ENCODE measurements at regions of chr22 and their contacts with region 1.

Region 1: GRCh38 chr22:17501679-17502285 is 61.5 kb upstream of the SLC25A18 start:
- DNase-seq: peak; percentile 52
- H3K4me3 Mint-ChIP-seq: no peak overlapping the region
- H3K27ac Mint-ChIP-seq: no peak overlapping the region
- H3K4me1 Mint-ChIP-seq: no peaks in the 10 kb centered on the region
- H3K27me3 Mint-ChIP-seq: peaks cover 2% of the 10 kb centered on the region

Region 2: DNA sequence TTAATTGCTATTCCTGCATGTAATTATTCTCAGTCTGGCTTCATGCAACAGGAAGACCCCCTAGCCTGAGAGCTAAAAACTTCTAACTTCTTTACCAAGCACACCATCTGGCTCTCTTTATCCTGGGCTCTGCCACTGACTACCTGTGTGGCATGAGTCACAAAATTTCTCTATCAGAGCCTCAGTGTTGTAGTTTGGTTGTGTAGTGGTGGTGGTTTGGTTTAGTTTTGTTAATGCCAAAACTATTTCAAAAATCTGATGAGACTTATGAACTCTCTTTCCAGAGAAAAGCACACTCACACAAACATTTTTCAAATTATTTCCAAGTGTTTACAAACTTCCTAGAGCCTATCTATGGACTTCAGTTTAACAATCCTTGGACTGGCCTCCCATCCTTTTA is 424.5 kb before region 1 on chr22:
- CTCF ChIA-PET with region 1: interaction called, 21 read pairs
- intact Hi-C with region 1: loop called (anchors 1 kb)
- DNase-seq: no peak
- H3K4me3 Mint-ChIP-seq: no peak overlapping the region
- H3K27ac Mint-ChIP-seq: no peak overlapping the region
- H3K4me1 Mint-ChIP-seq: peaks cover 20% of the 10 kb centered on the region
- H3K27me3 Mint-ChIP-seq: no peaks in the 10 kb centered on the region

Region 3: GRCh38 chr22:17205432-17205831 is 296.4 kb before region 1 on chr22:
- CTCF ChIA-PET with region 1: interaction called, 23 read pairs
- intact Hi-C with region 1: loop called (anchors 1 kb)
- DNase-seq: peak; percentile 14
- H3K4me3 Mint-ChIP-seq: no peak overlapping the region
- H3K27ac Mint-ChIP-seq: no peak overlapping the region
- H3K4me1 Mint-ChIP-seq: peaks cover 9% of the 10 kb centered on the region
- H3K27me3 Mint-ChIP-seq: no peaks in the 10 kb centered on the region

Region 4: DNA sequence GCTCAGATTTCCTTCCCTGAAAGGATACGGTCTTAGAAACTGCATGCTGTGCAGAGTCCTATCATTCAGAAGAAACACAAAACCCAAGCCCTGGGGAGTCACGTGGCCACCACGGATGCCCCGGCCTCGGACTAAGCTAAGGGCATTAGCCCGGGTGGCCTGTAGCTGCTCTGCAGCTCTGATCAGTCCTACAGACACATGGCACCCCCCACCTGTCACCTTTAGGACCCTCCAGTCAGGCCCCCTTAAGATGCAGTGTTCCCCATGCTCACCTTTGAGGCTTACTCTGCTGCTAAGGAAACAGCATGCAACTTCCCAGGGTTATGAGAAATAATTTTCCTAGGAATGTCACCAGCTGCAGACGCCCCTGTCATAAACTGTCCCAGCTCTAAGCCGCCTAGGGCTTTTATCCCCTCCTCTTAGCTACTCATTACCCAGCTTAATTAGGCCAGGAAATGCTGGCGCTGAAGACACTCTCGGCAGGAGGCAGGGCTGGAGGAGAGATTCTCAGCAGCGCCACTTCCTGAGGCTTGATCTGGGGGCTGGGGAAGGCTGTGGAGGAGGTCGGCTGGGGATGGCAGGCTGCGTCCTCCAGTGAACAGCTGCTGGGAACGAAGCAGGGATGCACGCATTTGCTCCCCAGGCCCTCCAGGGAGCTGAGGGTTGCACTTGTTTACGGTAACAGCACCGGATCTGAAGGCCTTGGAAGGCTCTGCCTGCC is 235.4 kb before region 1 on chr22:
- CTCF ChIA-PET with region 1: interaction called, 3 read pairs
- intact Hi-C with region 1: loop called (anchors 2 kb)
- DNase-seq: peak; percentile 54
- H3K4me3 Mint-ChIP-seq: no peak overlapping the region
- H3K27ac Mint-ChIP-seq: no peak overlapping the region
- H3K4me1 Mint-ChIP-seq: peaks cover 20% of the 10 kb centered on the region
- H3K27me3 Mint-ChIP-seq: no peaks in the 10 kb centered on the region

Region 5: DNA sequence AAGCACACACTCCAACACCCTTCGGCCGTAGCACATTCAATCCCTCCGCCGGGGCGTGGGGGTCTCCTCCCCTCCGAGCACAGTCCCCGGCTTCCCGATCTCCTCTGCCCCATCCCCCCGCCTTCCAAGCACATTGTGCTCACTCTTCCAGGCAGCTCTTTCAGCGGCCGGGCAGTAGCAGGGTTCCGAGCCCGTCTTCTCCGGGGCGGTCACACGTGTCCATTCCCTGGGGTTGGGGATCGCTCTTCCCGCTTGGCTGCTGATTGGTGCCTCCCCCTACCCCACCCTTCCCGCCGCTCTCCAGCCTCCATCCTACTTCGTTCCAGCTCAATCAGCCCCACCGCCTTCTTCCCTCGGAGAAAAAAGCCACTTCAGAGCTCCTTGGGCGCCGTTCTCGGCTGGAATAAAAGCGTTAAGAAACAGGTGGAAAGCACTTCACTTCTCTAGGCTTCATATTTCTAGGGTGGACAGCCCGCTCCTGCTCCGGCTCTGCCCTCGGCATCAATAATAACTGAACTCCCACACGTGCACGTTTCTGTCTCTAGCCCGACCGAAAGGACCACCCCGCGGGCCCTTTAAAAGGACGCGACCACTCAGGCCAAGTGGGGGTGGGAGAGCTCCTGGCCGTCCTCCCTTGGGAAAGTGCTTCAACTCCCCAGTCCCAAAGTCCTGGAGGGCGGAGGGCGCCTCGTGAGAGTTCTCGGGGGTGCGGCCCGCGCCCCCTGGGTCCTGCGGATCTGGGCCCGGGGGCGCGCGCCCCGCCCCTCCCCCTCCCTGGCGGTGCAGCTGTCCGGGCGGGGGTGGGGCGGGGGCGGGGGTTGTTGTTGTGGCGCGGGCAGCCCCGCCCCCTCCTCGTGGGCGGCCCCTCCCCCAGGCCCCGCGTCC is 133.0 kb before region 1 on chr22:
- CTCF ChIA-PET with region 1: no interaction called
- intact Hi-C with region 1: loop called (anchors 1 kb)
- DNase-seq: peak; percentile 8
- H3K4me3 Mint-ChIP-seq: peak overlapping the region; percentile 66
- H3K27ac Mint-ChIP-seq: no peak overlapping the region
- H3K4me1 Mint-ChIP-seq: peaks cover 22% of the 10 kb centered on the region
- H3K27me3 Mint-ChIP-seq: peaks cover 44% of the 10 kb centered on the region

Region 6: DNA sequence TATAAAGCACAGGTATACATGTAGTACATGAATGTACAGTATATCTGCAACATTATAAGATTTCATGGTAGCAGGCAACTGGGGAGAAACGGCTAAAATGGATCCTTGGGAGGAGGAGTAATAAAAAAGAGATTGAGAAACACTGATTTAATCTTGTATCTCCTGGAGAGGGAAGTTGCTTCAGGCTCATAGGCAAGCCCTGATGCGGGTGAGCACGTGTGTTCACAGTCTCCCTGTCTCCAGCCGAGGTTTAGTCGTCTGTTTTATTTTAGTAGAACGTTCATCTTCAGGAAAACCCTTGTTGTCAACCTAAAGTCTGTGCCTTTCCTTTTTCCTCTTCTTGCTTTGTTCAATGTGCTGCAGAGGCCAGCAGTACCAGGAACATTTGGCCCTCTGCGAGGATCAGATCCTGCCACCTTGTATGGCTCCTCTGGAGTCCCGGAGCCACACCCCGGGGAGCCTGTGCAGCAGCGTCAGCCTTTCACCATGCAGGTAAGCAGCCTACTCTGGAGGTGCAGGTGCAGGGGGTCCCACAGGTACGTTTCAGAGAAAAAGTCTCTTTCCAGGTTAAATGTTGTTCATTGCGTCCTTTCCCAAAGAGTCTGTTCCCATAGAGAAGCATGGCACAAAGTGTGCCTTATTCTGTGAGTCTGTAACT is 39.8 kb after region 1 on chr22:
- CTCF ChIA-PET with region 1: no interaction called
- intact Hi-C with region 1: no loop called
- DNase-seq: no peak
- H3K4me3 Mint-ChIP-seq: no peak overlapping the region
- H3K27ac Mint-ChIP-seq: no peak overlapping the region
- H3K4me1 Mint-ChIP-seq: no peaks in the 10 kb centered on the region
- H3K27me3 Mint-ChIP-seq: no peaks in the 10 kb centered on the region

Measured in activated naive CD4-positive, alpha-beta T cell treated with anti-CD3 and anti-CD28 coated beads for 36 hours (primary cell).